Esophagus squamous epithelium (tissue), 5 donors: ENCODE measurements at regions of chr10 and their contacts with region 1.

Region 1: DNA sequence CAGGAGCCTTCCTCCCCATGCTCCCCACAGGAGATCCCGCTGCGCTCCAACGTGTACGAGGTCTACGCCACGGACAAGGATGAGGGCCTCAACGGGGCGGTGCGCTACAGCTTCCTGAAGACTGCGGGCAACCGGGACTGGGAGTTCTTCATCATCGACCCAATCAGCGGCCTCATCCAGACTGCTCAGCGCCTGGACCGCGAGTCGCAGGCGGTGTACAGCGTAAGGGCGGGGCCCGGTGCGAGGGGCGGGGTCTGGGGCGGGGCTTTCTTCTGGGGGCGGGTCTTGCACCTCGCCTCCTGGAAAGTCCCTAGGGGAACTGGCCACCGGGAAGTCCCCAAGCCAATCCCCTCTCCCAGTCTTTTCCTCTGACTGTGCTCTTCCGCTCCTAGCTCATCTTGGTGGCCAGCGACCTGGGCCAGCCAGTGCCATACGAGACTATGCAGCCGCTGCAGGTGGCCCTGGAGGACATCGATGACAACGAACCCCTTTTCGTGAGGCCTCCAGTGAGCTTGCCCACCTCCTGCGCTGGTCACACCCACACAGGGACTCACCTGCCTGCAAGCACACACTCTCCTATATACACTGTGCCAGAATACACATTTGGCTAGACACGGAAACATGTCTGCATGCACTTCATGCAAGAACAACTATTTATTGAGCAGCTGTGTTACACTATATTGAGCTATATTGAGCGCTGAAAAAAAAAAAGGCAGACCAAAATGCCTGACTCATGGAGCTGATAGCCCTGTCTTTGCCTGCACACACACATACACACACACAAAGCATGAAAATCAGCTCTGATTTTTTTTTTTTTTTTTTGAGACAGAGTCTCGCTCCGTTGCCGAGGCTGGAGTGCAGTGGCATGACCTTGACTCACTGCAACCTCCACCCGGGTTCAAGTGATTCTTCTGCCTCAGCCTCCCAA is 32.7 kb upstream of the VSIR start:
- DNase-seq: no peak
- H3K4me3 ChIP-seq: no peak overlapping the region
- H3K27ac ChIP-seq: no peak overlapping the region
- H3K4me1 ChIP-seq: peaks cover 0 to 10% (median 0%) of the 10 kb centered on the region in 3 donors
- H3K27me3 ChIP-seq: no peaks in the 10 kb centered on the region
- CTCF ChIP-seq: no peak
- POLR2A ChIP-seq: no peak

Region 2: GRCh38 chr10:71684356-71685173 is 121.5 kb before region 1 on chr10:
- intact Hi-C with region 1: loop called (anchors 5 kb)
- DNase-seq: no peak
- H3K4me3 ChIP-seq: no peak overlapping the region
- H3K27ac ChIP-seq: no peak overlapping the region
- H3K4me1 ChIP-seq: peaks cover 0 to 9% (median 0%) of the 10 kb centered on the region in 3 donors
- H3K27me3 ChIP-seq: no peaks in the 10 kb centered on the region
- CTCF ChIP-seq: no peak
- POLR2A ChIP-seq: no peak